Left colon (tissue), 2 donors: ENCODE measurements at regions of chr14 and their contacts with region 1.

Region 1: GRCh38 chr14:30375296-30375892 is 183.6 kb upstream of the G2E3 start:
- DNase-seq: peak; percentile 30 to 67
- ATAC-seq: peak; percentile 88

Region 2: DNA sequence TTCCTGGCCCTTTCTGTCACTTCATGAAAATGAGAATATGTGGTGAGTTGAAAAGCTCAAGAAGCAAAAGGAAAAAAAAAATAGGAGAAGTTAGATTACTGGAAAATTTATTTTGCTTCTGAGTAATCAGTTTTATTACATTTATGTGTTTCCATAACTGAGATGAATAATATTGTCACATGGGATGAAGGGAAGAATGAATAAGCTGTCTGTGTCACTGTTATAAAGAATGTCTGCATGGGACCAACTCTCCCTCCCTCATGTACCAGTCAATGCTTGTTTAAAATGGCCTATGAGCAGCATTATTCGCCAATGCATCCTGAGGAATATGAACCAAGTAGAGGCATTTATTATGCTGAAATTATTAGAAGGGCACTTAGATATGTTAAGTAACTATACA is 694.1 kb before region 1 on chr14:
- intact Hi-C with region 1: no loop called
- DNase-seq: no peak
- ATAC-seq: no peak

Region 3: GRCh38 chr14:30204431-30204980 is 170.9 kb before region 1 on chr14:
- intact Hi-C with region 1: no loop called
- DNase-seq: no peak
- ATAC-seq: no peak

Region 4: GRCh38 chr14:30312214-30312613 is 63.2 kb before region 1 on chr14:
- intact Hi-C with region 1: no loop called
- DNase-seq: no peak
- ATAC-seq: no peak

Region 5: GRCh38 chr14:30521899-30522736 is 146.7 kb after region 1 on chr14:
- intact Hi-C with region 1: loop called in 1 of 2 experiments (anchors 10 kb)
- DNase-seq: no peak
- ATAC-seq: no peak

Region 6: GRCh38 chr14:30553311-30553989 is 178.1 kb after region 1 on chr14:
- intact Hi-C with region 1: no loop called
- DNase-seq: no peak
- ATAC-seq: peak; percentile 95